B cell (primary cell): ENCODE measurements at regions of chr15 and their contacts with region 1.

Region 1: DNA sequence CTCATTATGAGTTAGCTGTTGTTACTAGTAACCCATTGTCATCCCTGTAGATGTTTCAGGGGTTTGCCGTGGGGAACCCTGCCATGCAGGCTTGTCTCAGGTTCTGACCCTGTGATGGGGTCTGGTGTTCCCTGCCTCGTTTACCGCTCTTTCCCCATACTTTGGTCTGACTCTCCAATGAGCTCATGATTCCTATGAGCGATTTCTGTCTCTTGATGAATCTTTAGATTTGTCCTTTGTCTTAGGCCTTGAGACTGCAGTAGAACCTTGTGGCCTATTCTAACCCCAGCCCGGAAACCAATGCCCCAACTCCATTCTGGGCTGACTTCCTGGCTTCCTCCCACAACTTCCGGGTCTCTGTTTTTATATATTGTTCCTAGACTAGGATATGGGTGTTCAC is 11.3 kb upstream of the IQGAP1 start:
- DNase-seq: no peak
- ATAC-seq: no peak
- H3K4me3 ChIP-seq: peak overlapping the region in 1 of 5 experiments; percentile 47
- H3K4me3 Mint-ChIP-seq: peak overlapping the region; percentile 44
- H3K27ac ChIP-seq: peak overlapping the region; percentile 3 to 50
- H3K27ac Mint-ChIP-seq: peak overlapping the region; percentile 72
- H3K4me1 ChIP-seq: peaks cover 13 to 16% of the 10 kb centered on the region in 2 donors
- H3K4me1 Mint-ChIP-seq: peaks cover 17% of the 10 kb centered on the region
- H3K27me3 ChIP-seq: no peaks in the 10 kb centered on the region
- H3K27me3 Mint-ChIP-seq: no peaks in the 10 kb centered on the region
- CTCF ChIP-seq: no peak

Region 2: DNA sequence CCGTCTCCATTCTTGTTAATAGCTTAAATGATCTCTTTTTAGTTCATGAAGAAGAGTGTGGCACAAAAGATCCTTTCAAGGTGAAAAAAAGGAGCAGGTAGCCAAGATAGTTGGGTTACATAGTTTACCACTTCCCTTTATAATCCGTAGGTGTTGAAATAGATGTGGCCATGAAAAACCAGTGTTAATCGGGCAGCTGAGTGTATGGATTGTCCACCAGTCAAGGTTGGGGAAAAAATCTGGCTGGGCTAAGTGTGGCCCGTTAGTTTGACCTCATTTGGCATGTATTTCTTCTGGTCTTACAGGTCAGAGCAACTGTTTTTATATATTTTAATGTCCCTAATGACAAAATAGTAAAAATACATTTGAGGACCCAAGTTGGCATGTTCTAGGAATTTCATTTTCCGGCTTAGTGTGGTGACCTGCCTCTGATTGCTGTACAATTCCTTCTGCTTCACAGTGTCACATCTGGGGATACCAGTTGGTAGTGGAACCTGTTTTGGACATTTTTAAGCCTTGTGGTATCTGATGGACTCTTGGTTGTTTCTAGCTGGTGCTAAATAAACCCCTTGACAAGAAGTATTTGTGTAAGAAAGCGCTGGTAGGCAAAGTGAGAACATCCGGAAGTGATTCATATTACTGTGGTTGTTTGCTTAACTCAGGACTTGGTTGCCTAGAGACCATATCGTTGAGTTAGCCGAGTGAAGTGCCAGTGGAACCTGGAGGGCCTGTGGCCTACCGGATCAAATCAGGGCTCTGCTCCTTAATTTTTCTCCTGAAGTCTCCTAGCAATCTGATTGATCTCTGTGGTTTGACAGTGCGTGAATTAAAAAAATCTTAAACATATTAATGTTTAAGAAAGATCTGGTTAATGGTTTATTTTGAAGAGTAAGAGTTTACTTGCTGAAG is 23.9 kb after region 1 on chr15:
- CTCF ChIA-PET with region 1: no interaction called
- POLR2A ChIA-PET with region 1: no interaction called
- intact Hi-C with region 1: no loop called
- DNase-seq: peak; percentile 90
- ATAC-seq: peak; percentile 96
- H3K4me3 ChIP-seq: peak overlapping the region in 3 of 5 experiments; percentile 7 to 54 (median 29)
- H3K4me3 Mint-ChIP-seq: peak overlapping the region; percentile 78
- H3K27ac ChIP-seq: peak overlapping the region; percentile 92 to 95
- H3K27ac Mint-ChIP-seq: peak overlapping the region; percentile 96
- H3K4me1 ChIP-seq: peaks cover 31 to 36% of the 10 kb centered on the region in 2 donors
- H3K4me1 Mint-ChIP-seq: peaks cover 62% of the 10 kb centered on the region
- H3K27me3 ChIP-seq: no peaks in the 10 kb centered on the region
- H3K27me3 Mint-ChIP-seq: no peaks in the 10 kb centered on the region
- CTCF ChIP-seq: no peak

Region 3: DNA sequence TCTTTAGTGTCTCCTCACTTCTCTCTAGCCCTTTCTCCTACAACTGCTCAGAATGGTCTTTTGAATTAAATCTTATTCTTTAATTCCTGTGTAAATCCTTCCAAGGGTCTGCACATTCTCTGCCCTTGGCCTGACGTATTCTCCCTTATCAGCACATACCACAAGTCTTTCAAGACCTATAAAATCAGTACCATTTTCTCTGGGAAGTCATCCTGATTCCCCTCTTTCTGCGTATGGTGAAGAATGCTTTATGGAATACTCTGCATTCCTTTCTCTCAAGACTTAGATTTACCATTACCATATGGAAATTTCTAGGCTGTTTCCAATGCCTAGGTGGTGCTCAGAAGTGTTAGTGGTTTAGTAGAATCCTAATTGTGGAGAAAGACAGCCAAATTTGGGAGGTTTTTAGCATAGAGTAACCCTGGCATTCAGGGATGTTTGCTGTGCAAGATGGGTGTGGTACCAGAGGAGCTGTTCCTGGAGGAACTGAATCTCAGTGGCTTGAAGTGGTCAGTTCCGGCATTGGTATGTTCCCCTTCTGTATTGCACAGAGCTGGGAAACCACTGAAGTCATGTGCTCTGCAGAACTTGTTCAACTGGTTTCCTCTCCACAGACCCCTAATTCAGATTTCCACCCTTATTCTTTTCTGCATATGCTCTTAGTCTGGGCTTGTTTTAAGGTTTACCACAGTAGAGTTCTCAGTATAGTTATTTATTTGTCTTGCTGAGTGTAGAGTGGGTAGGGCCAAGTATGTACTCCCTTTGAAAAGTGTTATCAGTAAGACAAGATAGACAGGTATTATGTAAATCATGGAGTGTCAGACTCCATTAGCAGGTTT is 35.8 kb after region 1 on chr15:
- CTCF ChIA-PET with region 1: no interaction called
- POLR2A ChIA-PET with region 1: no interaction called
- intact Hi-C with region 1: loop called (anchors 5 kb)
- DNase-seq: peak; percentile 60
- ATAC-seq: peak; percentile 86
- H3K4me3 ChIP-seq: peak overlapping the region in 3 of 5 experiments; percentile 5 to 31 (median 12)
- H3K4me3 Mint-ChIP-seq: peak overlapping the region; percentile 70
- H3K27ac ChIP-seq: peak overlapping the region; percentile 2 to 50
- H3K27ac Mint-ChIP-seq: peak overlapping the region; percentile 63
- H3K4me1 ChIP-seq: peaks cover 26 to 41% of the 10 kb centered on the region in 2 donors
- H3K4me1 Mint-ChIP-seq: peaks cover 61% of the 10 kb centered on the region
- H3K27me3 ChIP-seq: no peaks in the 10 kb centered on the region
- H3K27me3 Mint-ChIP-seq: no peaks in the 10 kb centered on the region
- CTCF ChIP-seq: no peak